ENCODE measurements at regions of chr14 and their contacts with region 1.

Region 1: GRCh38 chr14:55864890-55865655 is 253.1 kb upstream of the PELI2 start:
- DNase-seq: no peak
- ATAC-seq: no peak
- H3K4me3 ChIP-seq: no peak overlapping the region
- H3K27ac ChIP-seq: no peak overlapping the region
- H3K4me1 ChIP-seq: no peaks in the 10 kb centered on the region
- H3K27me3 ChIP-seq: no peaks in the 10 kb centered on the region
- CTCF ChIP-seq: peak; percentile 29; the same call in 1 of the 2 replicates

Region 2: GRCh38 chr14:56087671-56088471 is 222.8 kb after region 1 on chr14:
- CTCF ChIA-PET with region 1: no interaction called
- POLR2A ChIA-PET with region 1: interaction called, 11 read pairs
- in situ Hi-C with region 1: no loop called
- intact Hi-C with region 1: no loop called
- DNase-seq: no peak
- ATAC-seq: no peak
- H3K4me3 ChIP-seq: no peak overlapping the region
- H3K27ac ChIP-seq: no peak overlapping the region
- H3K4me1 ChIP-seq: no peaks in the 10 kb centered on the region
- H3K27me3 ChIP-seq: no peaks in the 10 kb centered on the region; the same call in 1 of the 2 replicates
- CTCF ChIP-seq: no peak